Esophagus squamous epithelium (tissue), 5 donors: ENCODE measurements at regions of chr5 and their contacts with region 1.

Region 1: GRCh38 chr5:175718401-175719108 is 60.7 kb downstream of the HRH2 start:
- DNase-seq: no peak
- H3K4me3 ChIP-seq: no peak overlapping the region
- H3K27ac ChIP-seq: no peak overlapping the region
- H3K4me1 ChIP-seq: no peaks in the 10 kb centered on the region
- H3K27me3 ChIP-seq: peaks cover 0 to 6% (median 0%) of the 10 kb centered on the region in 4 donors
- CTCF ChIP-seq: peak; percentile 24 to 83 (median 64)
- POLR2A ChIP-seq: no peak

Region 2: GRCh38 chr5:175534070-175534932 is 184.3 kb before region 1 on chr5:
- intact Hi-C with region 1: loop called (anchors 5 kb)
- DNase-seq: peak; percentile 18
- H3K4me3 ChIP-seq: no peak overlapping the region
- H3K27ac ChIP-seq: no peak overlapping the region
- H3K4me1 ChIP-seq: peaks cover 0 to 8% (median 0%) of the 10 kb centered on the region in 3 donors
- H3K27me3 ChIP-seq: peaks cover 0 to 4% (median 0%) of the 10 kb centered on the region in 4 donors
- CTCF ChIP-seq: peak; percentile 77 to 100 (median 96)
- POLR2A ChIP-seq: no peak

Region 3: DNA sequence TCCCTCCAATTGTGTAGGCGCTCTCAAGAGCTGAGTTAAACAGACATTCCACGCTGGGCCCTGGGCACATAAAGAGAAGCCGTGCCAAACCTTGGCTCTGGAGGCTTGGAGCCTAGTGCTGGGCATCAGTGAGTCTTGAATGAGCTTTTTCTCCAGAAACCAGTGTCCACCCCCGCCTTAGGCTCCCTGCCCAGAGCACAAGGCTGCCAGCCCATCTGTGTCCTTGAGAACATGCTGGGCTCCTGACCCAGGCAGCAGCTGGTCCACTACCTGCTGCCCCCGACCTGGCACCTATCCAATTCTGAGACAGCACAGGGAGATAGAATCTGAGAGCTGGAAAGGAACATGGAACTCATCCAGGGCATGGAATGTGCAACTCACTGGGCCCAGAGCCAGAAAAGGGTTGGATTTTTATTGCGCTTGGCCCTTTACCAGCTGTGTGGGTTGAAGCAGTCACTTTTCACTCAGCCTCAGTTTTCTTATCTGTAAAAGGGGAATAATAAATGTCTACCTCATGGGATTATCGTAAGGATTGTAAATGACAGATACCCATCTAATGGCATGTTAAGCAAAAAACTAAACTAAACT is 60.5 kb after region 1 on chr5:
- intact Hi-C with region 1: no loop called
- DNase-seq: no peak
- H3K4me3 ChIP-seq: no peak overlapping the region
- H3K27ac ChIP-seq: no peak overlapping the region
- H3K4me1 ChIP-seq: no peaks in the 10 kb centered on the region
- H3K27me3 ChIP-seq: peaks cover 0 to 40% (median 0%) of the 10 kb centered on the region in 4 donors
- CTCF ChIP-seq: no peak
- POLR2A ChIP-seq: no peak